WTC11 (cell line): ENCODE measurements at regions of chr2 and their contacts with region 1.

Region 1: DNA sequence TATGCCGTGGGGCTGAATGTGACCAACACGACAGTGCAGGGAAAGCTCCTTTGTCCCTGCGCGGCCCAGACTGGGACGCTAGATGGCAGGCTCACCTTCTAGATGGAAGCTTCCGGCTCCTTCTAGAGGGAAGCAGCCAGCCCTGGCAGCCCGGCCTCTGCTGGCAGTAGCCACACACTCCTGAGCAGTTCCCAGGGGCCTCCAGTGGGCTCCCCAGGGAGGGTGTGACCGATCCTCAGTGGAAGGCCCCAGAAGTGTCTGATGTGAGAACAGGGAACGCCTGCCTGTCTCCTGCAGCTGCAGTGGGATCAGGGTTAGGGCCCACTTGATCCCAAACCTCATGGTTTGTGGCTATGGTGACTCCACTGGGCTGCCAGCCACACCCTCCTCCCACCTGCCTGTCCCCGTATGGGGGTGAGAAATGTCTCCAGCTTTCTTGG is 48.5 kb upstream of the LRPPRC start:
- DNase-seq: peak; percentile 93
- ATAC-seq: peak; percentile 99
- H3K4me3 Mint-ChIP-seq: no peak overlapping the region
- H3K27ac Mint-ChIP-seq: no peak overlapping the region
- H3K4me1 Mint-ChIP-seq: no peaks in the 10 kb centered on the region
- H3K27me3 Mint-ChIP-seq: peaks cover 4% of the 10 kb centered on the region
- CTCF ChIP-seq: peak; percentile 72; the same call in 1 of the 2 replicates

Region 2: GRCh38 chr2:44087036-44087713 is 42.9 kb after region 1 on chr2:
- CTCF ChIA-PET with region 1: interaction called, 15 read pairs
- POLR2A ChIA-PET with region 1: no interaction called
- DNase-seq: peak; percentile 94
- ATAC-seq: peak; percentile 87
- H3K4me3 Mint-ChIP-seq: peak overlapping the region; percentile 62
- H3K27ac Mint-ChIP-seq: peak overlapping the region; percentile 92
- H3K4me1 Mint-ChIP-seq: peaks cover 44% of the 10 kb centered on the region
- H3K27me3 Mint-ChIP-seq: no peaks in the 10 kb centered on the region
- CTCF ChIP-seq: peak; percentile 92

Region 3: GRCh38 chr2:44120428-44120827 is 76.1 kb after region 1 on chr2:
- CTCF ChIA-PET with region 1: no interaction called
- POLR2A ChIA-PET with region 1: no interaction called
- DNase-seq: no peak
- ATAC-seq: no peak
- H3K4me3 Mint-ChIP-seq: no peak overlapping the region
- H3K27ac Mint-ChIP-seq: no peak overlapping the region
- H3K4me1 Mint-ChIP-seq: peaks cover 18% of the 10 kb centered on the region
- H3K27me3 Mint-ChIP-seq: no peaks in the 10 kb centered on the region; the same call in 1 of the 2 replicates
- CTCF ChIP-seq: no peak

Region 4: GRCh38 chr2:44167940-44168680 is 123.8 kb after region 1 on chr2:
- CTCF ChIA-PET with region 1: interaction called, 10 read pairs
- POLR2A ChIA-PET with region 1: interaction called, 3 read pairs
- DNase-seq: peak; percentile 98
- ATAC-seq: peak; percentile 88
- H3K4me3 Mint-ChIP-seq: peak overlapping the region; percentile 77
- H3K27ac Mint-ChIP-seq: peak overlapping the region; percentile 99
- H3K4me1 Mint-ChIP-seq: peaks cover 27% of the 10 kb centered on the region
- H3K27me3 Mint-ChIP-seq: no peaks in the 10 kb centered on the region; the same call in none of the 2 replicates
- CTCF ChIP-seq: no peak

Region 5: DNA sequence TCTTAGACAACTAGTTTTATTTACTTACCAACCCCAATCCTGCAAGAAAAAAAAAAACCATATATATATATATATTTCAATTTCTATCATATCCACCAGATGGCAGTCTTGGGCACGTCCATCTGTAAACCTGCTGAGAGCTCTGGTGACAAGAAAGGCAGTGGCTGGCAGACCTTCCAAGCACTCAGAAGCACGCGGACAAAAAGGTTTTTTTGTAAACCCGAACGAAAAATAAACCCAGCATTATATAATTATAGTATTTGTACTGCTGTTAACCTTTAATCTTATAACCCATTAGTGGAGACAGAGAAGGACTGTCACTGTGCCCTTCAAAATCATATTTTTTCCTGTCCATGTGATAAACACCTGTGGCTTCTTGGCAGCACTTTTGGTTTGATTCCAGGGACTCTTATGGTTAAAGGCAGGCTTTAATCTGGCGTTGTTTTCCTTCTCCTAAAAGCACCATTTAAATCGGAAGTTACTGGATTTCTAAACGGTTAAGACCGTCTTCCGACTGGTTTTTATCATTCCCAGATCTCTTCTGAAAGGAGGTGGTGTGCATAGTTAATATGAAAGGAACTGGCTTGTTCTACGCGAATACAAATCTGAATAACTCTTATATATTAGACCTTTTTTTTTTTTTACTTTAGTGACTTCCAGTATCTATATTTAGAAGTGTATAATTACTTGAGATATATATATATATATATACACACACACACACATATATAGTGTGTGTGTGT is 200.0 kb after region 1 on chr2:
- CTCF ChIA-PET with region 1: interaction called, 18 read pairs
- POLR2A ChIA-PET with region 1: no interaction called
- DNase-seq: peak; percentile 41
- ATAC-seq: peak; percentile 49
- H3K4me3 Mint-ChIP-seq: no peak overlapping the region
- H3K27ac Mint-ChIP-seq: no peak overlapping the region
- H3K4me1 Mint-ChIP-seq: peaks cover 32% of the 10 kb centered on the region
- H3K27me3 Mint-ChIP-seq: no peaks in the 10 kb centered on the region
- CTCF ChIP-seq: peak; percentile 46; the same call in 1 of the 2 replicates

Region 6: DNA sequence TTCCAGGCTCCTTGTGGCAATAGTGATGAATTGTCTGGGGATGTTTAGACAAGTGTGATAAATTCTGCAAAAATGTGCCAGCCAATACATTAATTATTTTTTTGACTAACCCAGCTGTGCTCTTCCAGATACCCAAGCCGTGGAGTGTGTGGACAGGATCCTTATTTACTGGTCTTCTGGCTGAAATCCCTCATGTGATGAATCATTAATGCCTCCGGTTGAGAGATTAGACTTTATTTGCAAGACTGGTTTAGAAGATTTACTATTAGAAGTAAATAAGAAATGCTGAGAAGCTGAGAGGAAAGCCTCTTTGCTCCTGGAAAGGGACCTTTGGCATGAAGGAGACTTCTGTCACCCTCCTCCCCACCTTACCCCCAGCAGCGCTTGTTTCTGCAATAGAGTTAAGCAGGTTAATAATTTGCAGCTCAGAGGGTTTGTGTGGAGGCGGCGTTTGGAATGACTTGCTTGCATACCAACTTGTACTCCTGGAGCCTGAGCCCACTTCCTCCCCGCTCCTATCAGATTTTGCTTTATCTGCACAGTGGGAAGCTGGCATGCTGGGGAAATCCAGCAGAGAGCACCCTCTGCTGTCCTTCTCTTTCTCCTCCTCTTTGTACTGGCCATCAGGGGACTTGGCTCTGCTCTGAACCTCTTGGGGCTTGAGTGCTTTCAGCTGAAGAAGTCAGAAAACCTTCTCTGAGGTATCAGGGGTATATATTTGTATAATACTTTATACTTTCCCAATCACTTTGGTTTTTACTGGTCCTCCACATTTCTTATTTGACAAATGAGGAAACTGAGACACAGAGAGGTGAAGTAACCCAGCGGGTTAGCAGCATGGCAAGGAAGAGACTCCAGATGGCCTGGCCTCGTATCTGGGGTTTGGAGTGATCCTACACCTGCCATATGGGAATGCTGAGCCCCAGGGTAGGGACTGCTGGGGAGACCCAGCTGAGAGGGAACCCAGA is 247.3 kb after region 1 on chr2:
- CTCF ChIA-PET with region 1: interaction called, 21 read pairs
- POLR2A ChIA-PET with region 1: interaction called, 4 read pairs
- DNase-seq: peak; percentile 29
- ATAC-seq: peak; percentile 59
- H3K4me3 Mint-ChIP-seq: no peak overlapping the region
- H3K27ac Mint-ChIP-seq: no peak overlapping the region
- H3K4me1 Mint-ChIP-seq: peaks cover 24% of the 10 kb centered on the region
- H3K27me3 Mint-ChIP-seq: no peaks in the 10 kb centered on the region
- CTCF ChIP-seq: no peak

Region 7: DNA sequence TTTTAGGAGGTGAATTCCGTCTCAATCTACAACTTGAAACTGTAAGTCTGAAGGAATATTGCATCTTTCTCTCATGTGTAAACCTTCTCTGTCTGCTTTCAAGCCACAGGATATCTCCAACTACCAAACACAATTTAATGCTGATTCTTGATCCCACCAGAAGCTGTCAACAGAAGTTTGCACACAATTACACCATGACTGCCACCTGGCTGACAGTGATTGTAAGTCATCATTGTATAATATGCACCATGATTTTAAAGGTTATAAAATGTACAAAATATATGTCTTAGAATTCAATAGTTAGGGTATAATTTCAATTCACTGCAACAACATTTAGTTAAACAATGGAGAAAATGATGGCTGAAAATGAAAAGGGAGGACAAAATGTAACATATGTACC is 298.6 kb after region 1 on chr2:
- CTCF ChIA-PET with region 1: interaction called, 10 read pairs
- POLR2A ChIA-PET with region 1: no interaction called
- DNase-seq: no peak
- ATAC-seq: no peak
- H3K4me3 Mint-ChIP-seq: no peak overlapping the region
- H3K27ac Mint-ChIP-seq: no peak overlapping the region
- H3K4me1 Mint-ChIP-seq: no peaks in the 10 kb centered on the region
- H3K27me3 Mint-ChIP-seq: no peaks in the 10 kb centered on the region
- CTCF ChIP-seq: no peak

Region 8: GRCh38 chr2:44361330-44362206 is 317.3 kb after region 1 on chr2 and contains the starts of genes CAMKMT and PREPL:
- CTCF ChIA-PET with region 1: interaction called, 11 read pairs
- POLR2A ChIA-PET with region 1: no interaction called
- DNase-seq: peak; percentile 98
- ATAC-seq: peak; percentile 87
- H3K4me3 Mint-ChIP-seq: peak within 1 kb of the TSS; percentile 100
- H3K27ac Mint-ChIP-seq: peak within 1 kb of the TSS; percentile 99
- H3K4me1 Mint-ChIP-seq: peaks cover 18% of the 10 kb centered on the region
- H3K27me3 Mint-ChIP-seq: no peaks in the 10 kb centered on the region
- CTCF ChIP-seq: no peak
- total RNA-seq, gene CAMKMT: 20.3 to 21.3 TPM (median 20.6 TPM) in 3 replicates
- total RNA-seq, gene PREPL: 27.6 to 29.3 TPM (median 29.1 TPM) in 3 replicates